ENCODE measurements at regions of chr18 and their contacts with region 1.

Region 1: DNA sequence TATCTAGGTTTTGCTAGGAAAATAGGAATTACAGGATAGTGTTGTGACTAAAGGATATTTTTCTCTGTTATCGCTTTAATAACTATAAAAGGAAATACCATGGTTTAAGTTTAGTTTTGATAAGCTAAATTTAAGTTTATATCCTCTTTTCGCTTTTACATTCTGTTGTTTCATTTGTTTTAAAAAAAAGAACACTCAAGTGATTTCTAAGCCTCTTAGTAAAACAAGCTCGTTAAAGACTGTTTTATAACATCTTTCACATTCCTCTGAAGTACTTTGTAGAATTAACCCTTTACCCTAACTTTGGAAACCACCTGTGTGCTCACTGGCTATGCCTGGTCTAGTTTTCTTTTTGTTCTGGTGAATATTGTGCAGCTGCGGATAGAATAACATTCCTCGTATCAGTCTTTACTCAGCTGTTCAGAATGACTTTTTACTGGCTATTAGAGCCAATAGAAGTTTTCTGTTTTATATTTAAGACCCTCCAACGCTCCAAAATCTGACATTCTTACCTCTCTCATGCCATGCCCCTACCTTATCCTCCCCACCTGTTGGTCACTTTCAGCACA is 183.1 kb downstream of the PTPRM start:
- DNase-seq: no peak
- H3K4me3 ChIP-seq: no peak overlapping the region
- H3K4me3 Mint-ChIP-seq: peak overlapping the region; percentile 47
- H3K27ac Mint-ChIP-seq: peak overlapping the region; percentile 54
- H3K4me1 ChIP-seq: peaks cover 81% of the 10 kb centered on the region
- H3K4me1 Mint-ChIP-seq: peaks cover 65% of the 10 kb centered on the region
- H3K27me3 ChIP-seq: no peaks in the 10 kb centered on the region
- H3K27me3 Mint-ChIP-seq: no peaks in the 10 kb centered on the region
- CTCF ChIP-seq: no peak

Region 2: GRCh38 chr18:7735194-7735593 is 15.0 kb before region 1 on chr18:
- CTCF ChIA-PET with region 1: interaction called, 15 read pairs
- POLR2A ChIA-PET with region 1: interaction called, 11 read pairs
- intact Hi-C with region 1: loop called (anchors 1 kb)
- DNase-seq: peak in 1 of 2 experiments; percentile 33
- H3K4me3 ChIP-seq: no peak overlapping the region
- H3K4me3 Mint-ChIP-seq: peak overlapping the region; percentile 51
- H3K27ac Mint-ChIP-seq: peak overlapping the region; percentile 78
- H3K4me1 ChIP-seq: peaks cover 76% of the 10 kb centered on the region
- H3K4me1 Mint-ChIP-seq: peaks cover 40% of the 10 kb centered on the region
- H3K27me3 ChIP-seq: no peaks in the 10 kb centered on the region
- H3K27me3 Mint-ChIP-seq: no peaks in the 10 kb centered on the region
- CTCF ChIP-seq: peak; percentile 49 to 55

Measured in Caco-2 (cell line).